H1 (cell line): ENCODE measurements at regions of chr18 and their contacts with region 1.

Region 1: GRCh38 chr18:61581578-61582201 is 248.5 kb downstream of the CDH20 start:
- DNase-seq: peak; percentile 71 to 99
- H3K4me3 ChIP-seq: peak overlapping the region; percentile 37 to 60 (median 48); a peak in 7 of 8 replicates
- H3K27ac ChIP-seq: no peak overlapping the region
- H3K4me1 ChIP-seq: no peaks in the 10 kb centered on the region; a peak in 1 of 7 replicates
- H3K27me3 ChIP-seq: peaks cover 1 to 10% (median 8%) of the 10 kb centered on the region in 4 experiments; a peak in 6 of 7 replicates
- CTCF ChIP-seq: peak; percentile 88 to 94 (median 89)
- EP300 ChIP-seq: no peak
- POLR2A ChIP-seq: no peak
- RAD21 ChIP-seq: peak; percentile 88 to 91

Region 2: GRCh38 chr18:61551586-61551985 is 30.1 kb before region 1 on chr18:
- CTCF ChIA-PET with region 1: interaction called, 15 read pairs
- POLR2A ChIA-PET with region 1: no interaction called
- DNase-seq: peak in 1 of 2 experiments; percentile 47
- H3K4me3 ChIP-seq: no peak overlapping the region
- H3K27ac ChIP-seq: no peak overlapping the region
- H3K4me1 ChIP-seq: no peaks in the 10 kb centered on the region
- H3K27me3 ChIP-seq: no peaks in the 10 kb centered on the region
- CTCF ChIP-seq: peak in 2 of 3 experiments; percentile 77 to 79; a peak in 3 of 4 replicates
- EP300 ChIP-seq: no peak
- POLR2A ChIP-seq: no peak
- RAD21 ChIP-seq: peak; percentile 81 to 85

Region 3: GRCh38 chr18:61870151-61870550 is 288.5 kb after region 1 on chr18:
- CTCF ChIA-PET with region 1: interaction called, 10 read pairs
- POLR2A ChIA-PET with region 1: no interaction called
- DNase-seq: no peak
- H3K4me3 ChIP-seq: no peak overlapping the region
- H3K27ac ChIP-seq: no peak overlapping the region
- H3K4me1 ChIP-seq: no peaks in the 10 kb centered on the region
- H3K27me3 ChIP-seq: no peaks in the 10 kb centered on the region
- CTCF ChIP-seq: no peak
- EP300 ChIP-seq: no peak
- POLR2A ChIP-seq: no peak
- RAD21 ChIP-seq: no peak

Region 4: DNA sequence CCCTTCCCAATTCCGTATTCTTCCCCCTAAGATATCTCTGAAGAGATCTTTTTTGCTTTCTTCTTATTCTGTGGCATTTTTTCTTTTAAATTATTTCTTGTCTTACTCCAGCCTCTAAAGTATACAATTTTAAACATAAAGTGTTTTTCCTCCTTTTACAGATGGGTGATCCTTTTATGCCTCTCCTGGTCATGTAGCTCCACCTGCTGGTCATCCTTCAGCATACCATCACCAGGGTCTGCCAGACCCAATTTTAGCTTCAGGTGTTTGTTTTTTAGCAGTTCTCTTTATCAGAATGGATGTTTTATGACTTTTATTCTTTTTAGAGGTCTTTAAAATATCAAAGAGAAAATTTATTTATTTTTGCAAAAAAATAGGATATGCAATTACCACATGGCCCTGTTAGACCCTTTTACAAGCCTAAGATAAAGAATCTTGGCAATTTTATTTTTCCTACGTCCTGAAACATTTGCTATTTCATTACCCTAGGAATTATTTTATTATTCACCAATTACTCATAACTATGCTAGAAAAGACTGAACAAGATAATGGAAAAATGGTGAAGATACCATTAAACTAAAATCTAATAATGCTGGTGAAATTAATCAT is 549.7 kb after region 1 on chr18:
- CTCF ChIA-PET with region 1: interaction called, 15 read pairs
- POLR2A ChIA-PET with region 1: no interaction called
- DNase-seq: peak in 1 of 2 experiments; percentile 61
- H3K4me3 ChIP-seq: no peak overlapping the region
- H3K27ac ChIP-seq: no peak overlapping the region
- H3K4me1 ChIP-seq: no peaks in the 10 kb centered on the region
- H3K27me3 ChIP-seq: peaks cover 0 to 1% (median 0%) of the 10 kb centered on the region in 4 experiments; a peak in 1 of 7 replicates
- CTCF ChIP-seq: peak; percentile 60 to 86 (median 84)
- EP300 ChIP-seq: no peak
- POLR2A ChIP-seq: no peak
- RAD21 ChIP-seq: peak; percentile 97